Posterior vena cava (tissue), 2 donors: ENCODE measurements at regions of chr9 and their contacts with region 1.

Region 1: DNA sequence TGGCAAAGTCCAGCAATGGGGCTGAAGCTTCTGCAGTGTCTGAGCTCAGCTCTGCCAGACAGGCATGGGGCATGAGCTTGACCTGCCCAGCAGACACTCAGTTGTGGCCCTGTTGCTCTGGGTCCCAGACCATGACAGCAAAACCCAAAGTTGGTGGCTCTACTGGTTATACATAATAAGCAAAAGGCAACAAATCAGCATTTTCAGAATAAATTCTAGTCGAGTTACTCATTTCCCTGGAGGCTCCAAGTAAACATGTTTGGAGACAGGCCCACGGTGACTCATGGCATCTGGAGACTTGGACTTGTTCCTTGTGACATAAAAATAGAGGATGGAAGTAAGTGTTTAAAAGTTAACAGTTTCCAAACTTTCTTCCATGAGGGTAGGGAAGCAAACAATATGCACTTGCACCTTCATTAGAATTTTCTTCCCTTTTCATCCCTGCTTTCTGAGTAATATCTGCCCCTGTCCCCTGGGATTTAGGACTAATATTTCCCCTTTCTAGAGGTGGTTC is 60.2 kb upstream of the SLC2A8 start:
- DNase-seq: peak; percentile 89

Region 2: GRCh38 chr9:127224178-127224882 is 112.5 kb before region 1 on chr9:
- intact Hi-C with region 1: loop called (anchors 5 to 10 kb)
- DNase-seq: peak; percentile 96

Region 3: GRCh38 chr9:127423934-127424675 is 87.3 kb after region 1 on chr9 and contains the start of gene ZNF79:
- intact Hi-C with region 1: no loop called
- DNase-seq: peak; percentile 98
- total RNA-seq, gene ZNF79: 6.5 to 8.0 TPM

Region 4: DNA sequence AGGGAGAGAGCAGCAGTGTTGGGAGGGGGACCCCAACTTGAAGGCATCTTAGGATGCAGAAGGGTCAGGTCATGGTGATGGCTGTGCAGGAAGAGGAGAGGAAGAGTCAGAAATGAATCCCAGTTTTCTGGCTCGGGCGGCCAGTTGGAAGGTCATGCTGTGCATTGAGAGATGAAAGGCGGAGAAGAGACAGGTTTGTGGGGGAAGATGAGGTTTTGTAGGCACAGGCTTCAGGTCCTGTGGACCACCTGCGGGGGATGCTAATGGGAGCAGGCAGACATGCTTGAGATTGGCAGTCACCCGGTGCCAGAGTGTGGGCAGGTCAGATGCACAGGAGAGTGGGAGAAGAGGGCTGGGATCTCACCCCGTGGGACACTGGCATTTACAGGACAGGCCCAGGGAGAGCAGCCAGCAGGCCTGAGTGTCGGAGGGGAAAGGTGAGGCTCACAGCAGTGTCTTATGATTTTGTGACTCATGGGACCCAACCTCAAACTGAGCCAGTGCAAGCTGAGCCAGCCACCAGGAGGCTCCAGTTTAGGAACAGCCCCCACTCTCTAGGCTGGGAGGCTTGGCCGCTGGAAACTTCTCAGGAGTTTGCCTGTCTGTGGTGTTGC is 292.8 kb after region 1 on chr9:
- intact Hi-C with region 1: loop called in 1 of 2 experiments (anchors 5 kb)
- DNase-seq: no peak